A549 (cell line): ENCODE measurements at regions of chr12 and their contacts with region 1.

Region 1: DNA sequence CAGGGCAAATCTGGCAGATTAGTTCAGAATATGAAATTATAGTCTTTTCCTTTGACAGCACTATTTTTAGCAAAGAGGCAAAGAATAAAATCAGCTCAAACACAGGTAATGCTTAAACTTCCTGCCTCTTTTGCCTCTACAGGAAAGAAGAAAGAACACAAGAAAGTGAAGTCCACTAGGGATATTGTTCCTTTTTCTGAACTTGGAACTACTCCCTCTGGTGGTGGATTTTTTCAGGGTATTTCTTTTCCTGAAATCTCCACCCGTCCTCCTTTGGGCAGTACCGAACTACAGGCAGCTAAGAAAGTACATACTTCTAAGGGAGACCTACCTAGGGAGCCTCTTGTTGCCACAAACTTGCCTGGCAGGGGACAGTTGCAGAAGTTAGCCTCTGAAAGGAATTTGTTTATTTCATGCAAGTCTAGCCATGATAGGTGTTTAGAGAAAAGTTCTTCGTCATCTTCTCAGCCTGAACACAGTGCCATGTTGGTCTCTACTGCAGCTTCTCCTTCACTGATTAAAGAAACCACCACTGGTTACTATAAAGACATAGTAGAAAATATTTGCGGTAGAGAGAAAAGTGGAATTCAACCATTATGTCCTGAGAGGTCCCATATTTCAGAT is 17.4 kb downstream of the TMPO start:
- DNase-seq: peak; percentile 49 to 79
- ATAC-seq: peak; percentile 91 to 93
- H3K4me3 ChIP-seq: no peak overlapping the region
- H3K27ac ChIP-seq: peak overlapping the region; percentile 1 to 64; a peak in 3 of 6 replicates
- H3K4me1 ChIP-seq: peaks cover 19% of the 10 kb centered on the region; the same call in 2 of the 3 replicates
- CTCF ChIP-seq: peak; percentile 83
- EP300 ChIP-seq: no peak
- POLR2A ChIP-seq: no peak
- RAD21 ChIP-seq: peak; percentile 37 to 45; a peak in 4 of 5 replicates

Region 2: DNA sequence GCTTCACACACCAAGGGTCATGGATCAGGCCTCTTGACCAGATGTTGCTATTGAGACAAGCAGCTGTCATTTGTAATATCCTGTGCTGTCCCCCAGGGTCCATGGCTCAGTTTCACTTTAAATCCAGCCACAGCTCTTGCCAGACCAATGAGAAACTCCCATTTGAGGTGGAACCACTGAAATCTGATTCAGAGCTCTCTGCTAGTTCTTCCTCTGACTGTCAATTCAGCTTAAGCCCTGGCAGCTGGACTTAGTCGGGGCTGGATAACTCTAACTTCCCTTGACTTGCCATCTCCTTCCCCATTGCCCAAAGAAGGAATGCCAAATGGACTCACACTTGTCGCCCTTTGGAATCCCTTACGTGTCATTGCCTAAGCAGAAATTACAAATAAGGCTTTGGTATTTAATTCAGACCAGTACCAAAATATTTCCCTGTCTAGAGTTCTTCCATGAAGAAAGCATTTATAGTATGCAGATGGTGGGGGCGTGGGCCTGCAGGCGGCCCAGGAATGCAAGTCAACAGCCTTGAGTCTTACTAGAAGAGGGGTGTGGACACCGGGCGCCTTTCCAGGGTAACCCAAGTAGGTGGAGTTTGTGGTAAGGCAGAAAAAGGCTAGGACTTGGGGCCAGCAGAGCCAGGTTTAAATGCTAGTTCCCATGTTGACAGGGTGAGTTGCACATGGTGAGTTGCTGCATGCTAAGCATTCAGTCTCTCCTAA is 114.3 kb before region 1 on chr12:
- CTCF ChIA-PET with region 1: interaction called, 24 read pairs
- POLR2A ChIA-PET with region 1: no interaction called
- DNase-seq: peak; percentile 55 to 86
- ATAC-seq: peak; percentile 68 to 85
- H3K4me3 ChIP-seq: no peak overlapping the region
- H3K27ac ChIP-seq: peak overlapping the region; percentile 33 to 76; a peak in 4 of 6 replicates
- H3K4me1 ChIP-seq: peaks cover 34% of the 10 kb centered on the region
- CTCF ChIP-seq: no peak
- EP300 ChIP-seq: no peak
- POLR2A ChIP-seq: no peak
- RAD21 ChIP-seq: no peak

Region 3: DNA sequence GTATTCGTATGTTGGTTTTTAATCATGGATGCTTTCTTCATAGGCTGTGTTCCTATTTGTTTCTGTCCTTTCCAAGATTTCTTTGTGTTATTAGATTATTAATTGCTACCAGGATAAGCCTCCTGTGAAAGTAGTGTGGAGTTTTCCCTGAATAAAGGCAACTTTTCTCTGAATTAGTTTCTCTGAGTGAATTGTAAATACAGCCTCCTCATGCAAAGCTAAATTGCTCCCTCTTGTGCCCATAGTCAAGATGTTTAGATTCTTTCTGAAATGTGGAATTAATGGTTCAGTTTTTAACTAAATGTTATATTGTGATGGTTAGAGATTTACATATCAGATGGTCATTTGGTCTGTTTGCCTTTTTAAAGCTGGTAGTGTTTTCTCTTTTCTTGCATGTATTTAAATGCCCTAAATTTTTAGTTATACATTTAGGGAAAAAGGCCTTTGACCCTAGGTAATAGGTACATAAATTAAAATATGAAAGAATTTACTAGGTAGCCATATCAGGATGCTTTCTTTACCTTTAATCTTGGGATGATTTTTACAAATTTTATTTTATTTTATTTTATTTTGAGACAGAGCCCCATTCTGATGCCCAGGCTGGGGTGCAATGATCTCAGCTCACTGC is 121.2 kb after region 1 on chr12:
- CTCF ChIA-PET with region 1: interaction called, 20 read pairs
- POLR2A ChIA-PET with region 1: no interaction called
- DNase-seq: peak; percentile 33 to 77
- ATAC-seq: peak; percentile 64 to 83; a peak in 3 of 6 replicates
- H3K4me3 ChIP-seq: no peak overlapping the region
- H3K27ac ChIP-seq: no peak overlapping the region
- H3K4me1 ChIP-seq: no peaks in the 10 kb centered on the region
- CTCF ChIP-seq: peak; percentile 88
- EP300 ChIP-seq: no peak
- POLR2A ChIP-seq: no peak
- RAD21 ChIP-seq: peak; percentile 91 to 94

Region 4: GRCh38 chr12:98788396-98788795 is 255.6 kb after region 1 on chr12:
- CTCF ChIA-PET with region 1: no interaction called
- POLR2A ChIA-PET with region 1: no interaction called
- DNase-seq: no peak
- ATAC-seq: no peak
- H3K4me3 ChIP-seq: no peak overlapping the region
- H3K27ac ChIP-seq: no peak overlapping the region
- H3K4me1 ChIP-seq: no peaks in the 10 kb centered on the region
- CTCF ChIP-seq: no peak
- EP300 ChIP-seq: no peak
- POLR2A ChIP-seq: no peak
- RAD21 ChIP-seq: no peak